G401 (cell line): ENCODE measurements at regions of chr2 and their contacts with region 1.

Region 1: DNA sequence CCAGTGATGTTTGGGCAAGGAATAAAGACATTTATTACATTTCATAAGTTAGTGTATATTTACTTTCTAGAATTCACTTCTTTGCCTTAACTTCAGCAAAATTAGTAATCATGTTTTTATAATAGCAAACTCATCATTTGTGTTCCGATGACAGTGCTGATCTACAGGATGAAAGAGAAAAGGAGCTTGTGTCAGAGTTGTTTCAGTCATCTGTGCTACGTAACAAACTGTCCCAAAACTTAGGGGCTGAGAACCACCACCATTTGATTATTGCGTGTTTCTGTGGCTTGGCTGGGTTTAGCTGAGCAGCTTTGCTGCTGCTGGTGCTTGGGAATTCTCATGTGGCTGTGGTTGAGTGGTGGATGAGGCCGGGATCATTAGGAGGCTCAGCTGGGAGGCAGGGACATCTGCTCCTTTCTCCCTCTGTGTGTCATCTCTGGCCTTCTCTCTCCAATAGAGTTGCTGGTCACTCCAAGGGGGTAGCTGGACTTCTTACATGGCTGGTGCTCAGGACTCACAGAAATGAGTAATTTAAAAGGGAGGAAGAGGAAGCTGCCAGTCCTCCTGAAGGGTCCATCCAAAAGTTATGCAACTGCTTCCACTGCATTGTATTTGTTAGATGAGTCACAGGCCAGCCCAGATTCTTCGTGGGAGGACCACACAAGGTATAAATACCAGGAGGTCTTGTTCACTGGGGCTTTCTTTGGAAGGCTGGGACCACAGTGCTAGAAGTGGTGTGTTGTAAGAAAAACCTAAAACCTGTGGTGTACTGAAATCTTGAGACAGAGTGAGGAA is 43.4 kb upstream of the HAAO start:
- DNase-seq: no peak

Region 2: DNA sequence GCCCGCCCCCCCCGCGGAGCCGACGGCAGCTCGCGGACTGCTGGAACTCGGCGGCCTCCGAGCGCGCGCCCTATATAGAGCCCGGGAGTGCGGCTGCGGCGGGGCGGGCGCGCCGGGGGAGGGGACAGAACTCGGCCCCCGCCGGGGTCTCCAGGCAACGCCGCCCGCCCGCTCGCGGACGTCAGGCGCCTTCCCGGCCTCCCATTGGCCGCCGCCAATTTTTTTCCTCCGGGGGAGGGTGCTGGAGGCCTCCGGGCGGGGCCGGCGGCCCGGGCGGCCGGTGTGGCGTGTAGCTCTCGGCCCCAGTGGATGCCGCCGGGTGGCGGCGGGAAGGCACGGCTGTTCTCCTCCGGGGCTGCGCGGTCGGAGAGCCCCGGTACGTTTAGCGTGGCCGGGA is 390.8 kb after region 1 on chr2 and contains the start of gene ZFP36L2:
- in situ Hi-C with region 1: loop called (anchors 10 kb)
- DNase-seq: peak; percentile 69
- total RNA-seq, gene ZFP36L2: 22.5 and 32.4 TPM in 2 replicates